GM10248 (cell line): ENCODE measurements at regions of chr12 and their contacts with region 1.

Region 1: DNA sequence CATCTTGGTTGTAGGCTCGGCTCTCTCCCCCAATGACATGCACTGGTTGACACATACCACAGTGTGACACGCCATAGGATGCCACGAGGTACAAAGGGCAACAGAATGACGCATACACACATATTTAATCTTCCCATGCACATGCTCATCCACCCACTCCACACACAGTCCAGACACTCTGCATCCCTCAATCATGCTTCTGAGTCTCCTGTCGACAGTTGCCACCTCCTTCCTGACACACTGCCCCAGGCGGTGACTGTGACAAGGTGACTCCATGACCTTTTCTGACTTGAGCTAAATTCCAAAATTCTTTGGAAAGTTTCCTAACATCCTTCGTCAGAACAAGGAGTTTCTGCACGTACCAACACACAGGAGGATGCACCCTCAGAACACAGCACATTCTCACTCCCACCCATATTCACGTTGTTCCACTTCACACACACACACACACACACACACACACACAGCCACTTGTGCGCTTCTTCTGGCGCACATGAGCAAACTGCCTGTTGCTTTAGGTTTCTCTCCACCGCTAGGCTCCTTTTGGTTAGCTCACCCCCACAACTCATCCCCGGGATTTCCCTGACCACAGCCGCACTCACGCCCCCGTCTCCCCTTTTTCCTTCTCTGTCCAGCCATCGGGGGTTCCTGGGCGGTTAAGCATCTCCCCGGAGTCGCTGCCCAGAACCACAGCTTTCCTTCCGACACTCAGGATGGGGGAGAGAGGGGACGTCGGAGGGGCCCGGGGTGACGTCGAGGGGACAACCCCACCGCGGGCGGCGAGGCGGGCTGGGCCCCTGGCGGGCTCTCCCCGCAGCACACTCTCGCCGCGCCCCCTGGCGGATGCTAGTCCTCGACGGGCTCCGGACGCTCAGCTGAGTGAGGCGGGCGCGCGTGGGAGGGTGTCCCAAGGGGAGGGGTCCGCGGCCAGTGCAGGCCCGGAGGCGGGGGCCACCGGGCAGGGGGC is 524 bp upstream of the WNT1 start:
- DNase-seq: peak; percentile 87
- CTCF ChIP-seq: peak; percentile 72

Region 2: GRCh38 chr12:48903982-48904411 is 73.6 kb before region 1 on chr12:
- CTCF ChIA-PET with region 1: interaction called, 15 read pairs
- POLR2A ChIA-PET with region 1: no interaction called
- DNase-seq: peak; percentile 80
- CTCF ChIP-seq: peak; percentile 70

Region 3: GRCh38 chr12:48936379-48936979 is 41.1 kb before region 1 on chr12:
- CTCF ChIA-PET with region 1: interaction called, 23 read pairs
- POLR2A ChIA-PET with region 1: no interaction called
- DNase-seq: peak; percentile 85
- CTCF ChIP-seq: peak; percentile 92